PC-3 (cell line): ENCODE measurements at regions of chr4 and their contacts with region 1.

Region 1: DNA sequence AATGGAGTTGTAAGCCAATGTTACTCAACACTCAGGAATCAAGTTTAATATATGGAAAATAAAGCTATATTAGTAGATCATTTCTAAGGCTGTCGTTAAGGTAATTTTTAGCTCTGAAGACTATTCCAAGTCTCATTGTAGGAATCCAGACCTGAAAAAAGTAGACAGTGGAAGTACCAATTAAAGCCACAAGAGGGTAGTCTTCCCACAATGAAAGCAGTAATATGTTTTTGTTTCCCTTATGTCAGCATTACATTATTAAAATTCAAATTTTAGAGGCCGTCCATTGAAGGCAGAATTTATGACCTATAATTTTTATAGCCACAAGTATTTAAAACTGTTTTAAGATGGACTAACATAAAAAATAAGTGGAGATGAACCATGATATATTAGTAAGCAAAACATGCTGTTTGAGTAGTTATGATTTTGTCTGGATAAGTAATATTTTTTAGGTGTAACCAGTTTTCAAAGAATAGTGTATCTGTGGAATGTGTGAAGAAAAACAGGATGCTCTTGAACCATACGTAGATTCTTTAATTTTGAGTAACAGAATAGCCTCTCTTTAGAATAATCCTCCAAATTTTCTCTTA is 372.6 kb upstream of the TECRL start:
- DNase-seq: peak; percentile 80
- ATAC-seq: peak; percentile 59
- H3K4me3 ChIP-seq: no peak overlapping the region
- H3K27ac ChIP-seq: no peak overlapping the region
- H3K4me1 ChIP-seq: peaks cover 9% of the 10 kb centered on the region
- H3K27me3 ChIP-seq: no peaks in the 10 kb centered on the region
- CTCF ChIP-seq: peak; percentile 94

Region 2: DNA sequence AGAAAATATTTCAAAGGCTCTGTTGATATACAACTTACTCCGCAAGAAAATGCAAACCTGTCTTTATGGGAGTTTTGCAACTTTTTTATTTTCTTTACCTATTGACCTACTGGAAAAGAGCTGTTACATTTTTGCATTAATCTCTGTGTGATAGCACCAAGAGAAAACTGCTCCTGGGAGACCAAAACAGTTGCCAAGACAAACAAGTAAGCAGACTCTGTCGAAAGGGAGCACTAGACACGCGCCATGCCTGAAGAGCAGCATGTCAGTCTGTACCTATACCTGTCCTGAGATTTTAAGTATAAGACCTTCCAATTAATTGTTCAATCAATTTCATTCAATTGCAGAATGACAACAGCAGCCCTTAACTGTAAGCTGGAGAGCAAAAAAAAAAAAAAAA is 316.6 kb before region 1 on chr4:
- CTCF ChIA-PET with region 1: no interaction called
- POLR2A ChIA-PET with region 1: no interaction called
- intact Hi-C with region 1: no loop called
- DNase-seq: no peak
- ATAC-seq: no peak
- H3K4me3 ChIP-seq: no peak overlapping the region
- H3K27ac ChIP-seq: no peak overlapping the region
- H3K4me1 ChIP-seq: no peaks in the 10 kb centered on the region
- H3K27me3 ChIP-seq: no peaks in the 10 kb centered on the region
- CTCF ChIP-seq: no peak

Region 3: GRCh38 chr4:64617800-64618199 is 164.0 kb before region 1 on chr4:
- CTCF ChIA-PET with region 1: no interaction called
- POLR2A ChIA-PET with region 1: no interaction called
- intact Hi-C with region 1: loop called (anchors 2 kb)
- DNase-seq: peak; percentile 77
- ATAC-seq: peak; percentile 67
- H3K4me3 ChIP-seq: no peak overlapping the region
- H3K27ac ChIP-seq: no peak overlapping the region
- H3K4me1 ChIP-seq: peaks cover 4% of the 10 kb centered on the region; the same call in 1 of the 2 replicates
- H3K27me3 ChIP-seq: no peaks in the 10 kb centered on the region
- CTCF ChIP-seq: peak; percentile 80

Region 4: GRCh38 chr4:64713256-64713840 is 68.5 kb before region 1 on chr4:
- CTCF ChIA-PET with region 1: no interaction called
- POLR2A ChIA-PET with region 1: no interaction called
- intact Hi-C with region 1: loop called (anchors 5 kb)
- DNase-seq: peak; percentile 81
- ATAC-seq: peak; percentile 52
- H3K4me3 ChIP-seq: no peak overlapping the region
- H3K27ac ChIP-seq: no peak overlapping the region
- H3K4me1 ChIP-seq: peaks cover 2% of the 10 kb centered on the region; the same call in 1 of the 2 replicates
- H3K27me3 ChIP-seq: no peaks in the 10 kb centered on the region
- CTCF ChIP-seq: peak; percentile 82

Region 5: DNA sequence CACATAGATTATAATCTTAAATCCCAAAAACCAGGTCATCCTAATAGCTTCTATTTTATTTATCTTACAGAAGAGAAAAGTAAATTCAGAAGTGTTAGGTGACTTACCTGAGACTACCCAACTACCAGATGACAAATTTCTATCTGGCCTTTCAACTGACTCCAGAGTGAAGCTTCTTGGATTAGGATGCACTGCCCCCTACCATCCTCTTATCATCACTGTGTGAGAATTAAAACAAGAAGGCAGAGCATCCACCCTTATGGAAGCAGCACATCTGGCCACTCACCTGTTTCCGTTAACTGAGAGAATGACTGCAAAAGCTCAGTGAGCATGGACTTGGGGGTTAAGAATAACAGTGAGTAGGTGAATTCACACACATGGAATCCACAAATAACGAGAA is 130.0 kb after region 1 on chr4:
- CTCF ChIA-PET with region 1: no interaction called
- POLR2A ChIA-PET with region 1: no interaction called
- intact Hi-C with region 1: loop called (anchors 1 kb)
- DNase-seq: peak; percentile 41
- ATAC-seq: peak; percentile 70
- H3K4me3 ChIP-seq: no peak overlapping the region
- H3K27ac ChIP-seq: no peak overlapping the region
- H3K4me1 ChIP-seq: no peaks in the 10 kb centered on the region
- H3K27me3 ChIP-seq: no peaks in the 10 kb centered on the region
- CTCF ChIP-seq: peak; percentile 52; the same call in 1 of the 2 replicates

Region 6: DNA sequence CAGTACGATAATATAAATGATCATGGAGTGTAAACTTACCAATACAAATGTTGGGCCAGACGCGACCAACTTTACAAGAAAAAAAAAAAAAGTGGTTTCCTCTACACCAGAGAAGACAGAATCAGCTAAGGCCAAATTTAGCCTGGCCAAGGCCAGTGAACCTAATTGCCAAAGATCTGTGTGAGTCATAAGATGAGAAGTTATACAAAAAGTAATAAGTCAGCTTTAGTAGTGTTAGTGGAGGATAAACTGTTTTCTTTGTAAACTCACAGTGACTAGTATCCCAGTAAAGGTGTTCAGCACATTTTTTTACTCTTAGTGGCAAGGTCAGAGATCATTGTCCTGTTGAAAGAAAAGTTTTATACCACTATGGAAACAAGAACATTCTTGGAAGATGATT is 158.9 kb after region 1 on chr4:
- CTCF ChIA-PET with region 1: no interaction called
- POLR2A ChIA-PET with region 1: no interaction called
- intact Hi-C with region 1: loop called (anchors 2 kb)
- DNase-seq: peak; percentile 95
- ATAC-seq: peak; percentile 99
- H3K4me3 ChIP-seq: no peak overlapping the region
- H3K27ac ChIP-seq: 0 out of 2 replicates have a peak overlapping the region, but pooled peaks have one; percentile 7
- H3K4me1 ChIP-seq: peaks cover 20% of the 10 kb centered on the region
- H3K27me3 ChIP-seq: no peaks in the 10 kb centered on the region
- CTCF ChIP-seq: no peak

Region 7: GRCh38 chr4:65007841-65008439 is 226.1 kb after region 1 on chr4:
- CTCF ChIA-PET with region 1: interaction called, 5 read pairs
- POLR2A ChIA-PET with region 1: no interaction called
- intact Hi-C with region 1: loop called (anchors 2 kb)
- DNase-seq: peak; percentile 86
- ATAC-seq: peak; percentile 63
- H3K4me3 ChIP-seq: no peak overlapping the region
- H3K27ac ChIP-seq: no peak overlapping the region
- H3K4me1 ChIP-seq: no peaks in the 10 kb centered on the region
- H3K27me3 ChIP-seq: no peaks in the 10 kb centered on the region
- CTCF ChIP-seq: peak; percentile 91

Region 8: DNA sequence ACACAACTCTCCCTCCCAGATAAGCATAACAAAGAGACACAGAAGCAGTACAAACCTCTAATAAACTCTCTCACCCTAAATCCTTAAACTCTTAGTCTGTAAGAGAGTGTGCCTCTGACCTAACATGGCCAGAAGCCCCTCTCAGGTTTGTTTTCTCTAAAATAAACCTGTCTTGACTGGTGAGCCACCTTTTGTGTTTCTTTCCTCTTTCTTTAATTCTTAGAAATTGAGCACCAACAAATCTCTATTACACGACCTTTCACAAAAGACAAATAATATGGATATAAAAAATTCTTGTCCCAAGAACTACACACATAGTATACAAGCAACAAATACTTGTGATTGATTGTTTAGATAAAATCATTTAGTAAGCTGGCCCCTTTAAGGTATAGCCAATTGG is 314.8 kb after region 1 on chr4:
- CTCF ChIA-PET with region 1: no interaction called
- POLR2A ChIA-PET with region 1: no interaction called
- intact Hi-C with region 1: no loop called
- DNase-seq: no peak
- ATAC-seq: no peak
- H3K4me3 ChIP-seq: no peak overlapping the region
- H3K27ac ChIP-seq: no peak overlapping the region
- H3K4me1 ChIP-seq: 0 out of 2 replicates have a peak, but pooled peaks cover 4% of the 10 kb centered on the region
- H3K27me3 ChIP-seq: no peaks in the 10 kb centered on the region
- CTCF ChIP-seq: no peak

Region 9: DNA sequence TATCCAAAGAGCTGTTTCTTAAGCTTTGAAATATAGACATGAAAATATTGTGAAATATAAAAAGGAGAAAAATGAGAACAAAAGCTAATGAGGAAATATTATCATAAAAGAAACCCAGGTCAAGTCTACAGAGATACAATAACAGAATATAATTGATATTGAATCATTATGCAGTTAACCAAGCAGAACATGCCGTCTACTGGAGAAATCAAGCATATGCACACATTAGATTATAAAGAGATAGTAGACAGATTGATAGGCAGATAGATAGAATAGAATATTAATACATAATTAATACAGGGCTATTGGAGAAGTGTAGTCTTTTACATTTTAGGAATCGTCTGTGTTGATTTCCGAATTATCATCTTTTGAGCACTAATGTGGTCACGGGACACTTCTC is 679.9 kb after region 1 on chr4:
- CTCF ChIA-PET with region 1: no interaction called
- POLR2A ChIA-PET with region 1: no interaction called
- intact Hi-C with region 1: loop called (anchors 5 kb)
- DNase-seq: peak; percentile 32
- ATAC-seq: no peak; the same call in 1 of the 2 replicates
- H3K4me3 ChIP-seq: no peak overlapping the region
- H3K27ac ChIP-seq: no peak overlapping the region
- H3K4me1 ChIP-seq: peaks cover 7% of the 10 kb centered on the region
- H3K27me3 ChIP-seq: no peaks in the 10 kb centered on the region
- CTCF ChIP-seq: peak; percentile 64